Panc1 (cell line): ENCODE measurements at regions of chr13 and their contacts with region 1.

Region 1: DNA sequence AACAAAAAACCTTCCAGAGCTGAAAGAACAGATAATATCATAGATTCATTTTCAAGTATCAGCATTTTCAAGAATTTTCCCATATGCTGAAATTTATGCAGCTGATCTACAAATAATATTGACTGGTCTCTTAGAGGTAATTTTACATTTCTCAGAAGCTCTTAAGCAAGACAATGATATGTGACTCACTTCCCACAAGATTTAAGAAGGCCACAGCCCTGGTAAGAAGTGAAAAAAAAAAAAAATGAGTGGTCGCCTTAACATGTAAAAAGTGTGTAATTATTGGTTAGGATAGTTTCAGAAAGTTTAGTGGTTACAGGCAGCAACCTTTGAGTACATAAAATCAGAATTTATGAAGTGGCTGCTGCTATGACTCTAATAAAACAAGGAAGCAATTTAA is 54.5 kb downstream of the NUFIP1 start:
- DNase-seq: no peak
- ATAC-seq: no peak
- H3K4me3 ChIP-seq: no peak overlapping the region
- H3K27ac ChIP-seq: no peak overlapping the region
- H3K4me1 ChIP-seq: no peaks in the 10 kb centered on the region
- H3K27me3 ChIP-seq: no peaks in the 10 kb centered on the region
- CTCF ChIP-seq: no peak

Region 2: DNA sequence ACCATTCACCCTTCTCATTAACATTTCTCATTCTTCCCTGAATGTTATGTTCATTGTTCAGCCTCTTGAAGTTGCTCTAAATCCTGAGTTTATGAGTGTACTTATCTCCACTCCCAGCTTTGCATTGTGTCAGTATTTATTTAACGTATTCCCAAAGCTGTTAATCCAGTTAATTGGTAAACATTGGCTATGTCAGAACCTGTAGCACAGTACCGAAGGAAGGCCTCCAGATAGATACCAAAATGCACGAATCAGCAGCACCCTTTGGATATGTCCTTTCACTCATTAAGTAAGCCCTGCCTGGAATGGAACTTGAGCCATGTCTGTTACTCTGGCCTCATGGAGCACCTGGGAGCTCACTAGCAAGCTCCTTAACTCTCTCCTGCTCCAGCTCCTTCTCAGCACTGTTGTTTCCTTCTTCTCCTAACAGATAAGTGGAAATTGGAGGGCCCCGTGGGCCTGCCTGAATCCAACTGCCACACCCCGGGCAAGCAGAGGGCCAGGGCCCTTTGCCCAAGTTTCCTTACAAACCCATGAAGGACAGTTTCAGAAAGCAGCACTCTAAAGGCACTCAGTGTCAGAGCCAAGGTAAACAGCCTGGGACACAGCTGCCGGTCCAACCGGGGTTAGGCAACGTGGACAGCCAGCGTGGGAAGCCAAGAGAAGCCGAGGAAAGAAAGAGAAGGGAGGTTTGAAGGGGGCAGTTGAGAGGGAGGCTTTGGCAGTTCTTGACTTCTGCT is 716.1 kb before region 1 on chr13:
- CTCF ChIA-PET with region 1: no interaction called
- POLR2A ChIA-PET with region 1: no interaction called
- in situ Hi-C with region 1: no loop called
- intact Hi-C with region 1: no loop called
- DNase-seq: no peak
- ATAC-seq: no peak
- H3K4me3 ChIP-seq: no peak overlapping the region
- H3K27ac ChIP-seq: no peak overlapping the region
- H3K4me1 ChIP-seq: no peaks in the 10 kb centered on the region
- H3K27me3 ChIP-seq: no peaks in the 10 kb centered on the region
- CTCF ChIP-seq: no peak

Region 3: GRCh38 chr13:44904967-44905366 is 29.8 kb before region 1 on chr13:
- CTCF ChIA-PET with region 1: no interaction called
- POLR2A ChIA-PET with region 1: interaction called, 12 read pairs
- in situ Hi-C with region 1: no loop called
- intact Hi-C with region 1: no loop called
- DNase-seq: no peak
- ATAC-seq: peak; percentile 80; the same call in 1 of the 2 replicates
- H3K4me3 ChIP-seq: no peak overlapping the region
- H3K27ac ChIP-seq: no peak overlapping the region; the same call in 1 of the 2 replicates
- H3K4me1 ChIP-seq: no peaks in the 10 kb centered on the region
- H3K27me3 ChIP-seq: no peaks in the 10 kb centered on the region
- CTCF ChIP-seq: no peak

Region 4: DNA sequence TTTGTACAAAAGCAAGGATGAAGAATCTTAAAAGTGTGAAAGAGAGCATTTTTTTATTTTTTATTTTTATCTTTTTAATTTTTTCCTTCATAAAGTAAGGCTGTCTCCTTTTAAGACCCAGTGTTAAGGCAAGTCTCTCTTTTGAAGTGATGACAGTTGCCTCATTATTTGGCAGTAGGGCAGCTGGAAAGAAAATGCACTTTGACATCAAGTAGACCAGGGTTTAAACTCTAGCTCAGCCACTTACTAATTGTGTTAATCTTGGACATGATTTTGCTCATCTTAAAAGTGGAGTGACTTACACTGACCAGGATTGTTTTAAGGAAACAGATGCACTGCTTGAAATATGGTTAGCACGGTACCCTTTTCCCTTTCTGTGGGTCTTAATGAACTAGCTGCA is 73.1 kb after region 1 on chr13:
- CTCF ChIA-PET with region 1: no interaction called
- POLR2A ChIA-PET with region 1: no interaction called
- in situ Hi-C with region 1: no loop called
- intact Hi-C with region 1: no loop called
- DNase-seq: no peak
- ATAC-seq: no peak
- H3K4me3 ChIP-seq: no peak overlapping the region
- H3K27ac ChIP-seq: no peak overlapping the region
- H3K4me1 ChIP-seq: no peaks in the 10 kb centered on the region
- H3K27me3 ChIP-seq: no peaks in the 10 kb centered on the region
- CTCF ChIP-seq: no peak